ENCODE measurements at regions of chr22 and their contacts with region 1.

Region 1: DNA sequence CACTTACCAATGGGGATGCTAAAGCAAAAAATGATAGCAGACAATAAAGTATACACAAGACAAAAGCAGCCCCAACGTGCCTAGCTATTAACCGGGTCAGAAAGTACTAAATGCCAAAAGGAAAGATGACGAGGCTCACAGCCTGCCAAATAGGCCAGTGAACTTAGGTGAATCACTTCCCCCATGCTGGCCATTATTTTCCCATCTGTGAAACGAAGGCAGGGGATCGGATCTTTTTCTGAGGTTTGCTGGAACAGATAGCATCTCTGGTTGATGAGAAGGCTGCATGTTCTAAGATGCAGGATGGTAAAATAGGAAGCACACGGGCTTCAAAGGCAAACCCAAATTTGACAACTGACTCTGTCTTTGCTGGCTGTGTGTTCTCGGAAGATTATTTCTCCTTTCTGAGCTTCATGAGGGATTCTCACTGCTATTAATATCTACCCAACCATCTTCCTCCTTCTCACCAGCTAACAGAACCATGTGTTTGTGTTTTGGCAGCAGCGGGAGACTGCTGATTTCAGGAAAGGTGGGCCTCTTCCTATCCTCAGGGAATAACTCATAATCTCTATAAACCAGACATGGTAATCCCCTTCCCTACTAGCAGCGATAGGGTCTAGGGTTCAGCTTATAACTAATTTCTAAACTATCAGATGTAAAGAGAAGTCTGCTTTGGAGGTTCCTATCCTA is 390.7 kb downstream of the LARGE1 start:
- DNase-seq: peak in 1 of 2 donors; percentile 23
- ATAC-seq: peak; percentile 41 to 88 (median 57)
- H3K4me3 ChIP-seq: no peak overlapping the region
- H3K27ac ChIP-seq: peak overlapping the region in 5 of 10 donors; percentile 20 to 55 (median 52)
- H3K4me1 ChIP-seq: peaks cover 0 to 33% (median 20%) of the 10 kb centered on the region in 9 donors
- H3K27me3 ChIP-seq: no peaks in the 10 kb centered on the region
- CTCF ChIP-seq: no peak

Region 2: GRCh38 chr22:33472462-33473344 is 56.9 kb before region 1 on chr22:
- intact Hi-C with region 1: no loop called
- DNase-seq: no peak
- ATAC-seq: peak in 6 of 8 donors; percentile 67 to 87 (median 82)
- H3K4me3 ChIP-seq: no peak overlapping the region
- H3K27ac ChIP-seq: peak overlapping the region in 6 of 10 donors; percentile 58 to 73 (median 68)
- H3K4me1 ChIP-seq: peaks cover 0 to 54% (median 33%) of the 10 kb centered on the region in 9 donors
- H3K27me3 ChIP-seq: no peaks in the 10 kb centered on the region
- CTCF ChIP-seq: no peak

Region 3: GRCh38 chr22:33565580-33565995 is 36.0 kb after region 1 on chr22:
- intact Hi-C with region 1: loop called in 2 of 10 experiments (anchors 5 kb)
- DNase-seq: peak in 1 of 2 donors; percentile 13
- ATAC-seq: peak in 6 of 8 donors; percentile 30 to 94 (median 77)
- H3K4me3 ChIP-seq: no peak overlapping the region
- H3K27ac ChIP-seq: peak overlapping the region in 4 of 10 donors; percentile 26 to 82 (median 46)
- H3K4me1 ChIP-seq: peaks cover 3 to 76% (median 45%) of the 10 kb centered on the region in 9 donors
- H3K27me3 ChIP-seq: no peaks in the 10 kb centered on the region
- CTCF ChIP-seq: no peak

Region 4: DNA sequence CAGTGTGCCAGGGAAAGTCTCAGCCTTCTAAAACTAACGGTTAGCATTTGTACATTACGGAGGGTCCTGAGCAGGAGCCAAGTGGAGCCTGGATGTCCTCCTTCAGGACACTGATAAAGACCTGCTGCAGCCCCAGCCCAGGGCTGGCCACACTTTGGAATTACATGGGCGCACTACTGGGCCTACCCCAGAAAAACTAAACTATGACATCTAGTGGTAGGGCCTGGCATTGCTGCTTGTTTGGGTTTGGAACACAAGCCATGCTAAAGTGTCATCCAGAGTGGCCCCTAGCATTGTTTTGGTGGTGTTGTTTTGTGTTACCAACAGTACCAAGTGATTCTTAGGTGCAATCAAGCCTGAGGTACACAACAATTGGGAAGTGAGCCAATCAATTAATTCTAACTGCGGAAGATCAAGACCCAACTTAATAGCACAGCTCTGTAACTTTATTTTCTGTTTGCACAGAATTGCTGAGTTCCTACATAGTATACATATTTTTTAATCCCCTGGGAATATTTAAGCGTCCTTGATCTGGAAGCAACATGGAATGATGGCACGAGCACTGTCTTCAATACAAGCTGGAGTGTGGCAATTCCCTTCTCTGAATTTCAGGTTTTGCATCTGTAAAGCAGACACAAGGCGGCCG is 50.0 kb after region 1 on chr22:
- intact Hi-C with region 1: no loop called
- DNase-seq: peak; percentile 41 to 75
- ATAC-seq: peak; percentile 88 to 94 (median 92)
- H3K4me3 ChIP-seq: no peak overlapping the region
- H3K27ac ChIP-seq: no peak overlapping the region
- H3K4me1 ChIP-seq: peaks cover 7 to 42% (median 24%) of the 10 kb centered on the region in 9 donors
- H3K27me3 ChIP-seq: no peaks in the 10 kb centered on the region
- CTCF ChIP-seq: peak; percentile 78 to 96 (median 93)

Region 5: GRCh38 chr22:34105461-34106062 is 576.0 kb after region 1 on chr22:
- intact Hi-C with region 1: loop called in 1 of 10 experiments (anchors 10 kb)
- DNase-seq: peak; percentile 43 to 54
- ATAC-seq: peak in 5 of 8 donors; percentile 62 to 83 (median 70)
- H3K4me3 ChIP-seq: no peak overlapping the region
- H3K27ac ChIP-seq: no peak overlapping the region
- H3K4me1 ChIP-seq: no peaks in the 10 kb centered on the region
- H3K27me3 ChIP-seq: peaks cover 0 to 26% (median 8%) of the 10 kb centered on the region in 7 donors
- CTCF ChIP-seq: peak; percentile 35 to 75 (median 69)

Measured in heart right ventricle (tissue), 16 donors.